Left ventricle myocardium inferior (tissue), 1 donor: ENCODE measurements at regions of chr22 and their contacts with region 1.

Region 1: GRCh38 chr22:23772649-23773495 is at the start of gene MMP11:
- DNase-seq: peak; percentile 73
- H3K4me3 ChIP-seq: peak within 1 kb of the TSS; percentile 70
- H3K27ac ChIP-seq: peak within 1 kb of the TSS; percentile 83
- H3K4me1 ChIP-seq: peaks cover 79% of the 10 kb centered on the region
- H3K27me3 ChIP-seq: no peaks in the 10 kb centered on the region
- CTCF ChIP-seq: peak; percentile 12
- total RNA-seq, gene MMP11: 16.9 TPM

Region 2: GRCh38 chr22:23849009-23850006 is 76.4 kb after region 1 on chr22:
- intact Hi-C with region 1: loop called (anchors 5 kb)
- DNase-seq: peak; percentile 84
- H3K4me3 ChIP-seq: peak overlapping the region; percentile 23
- H3K27ac ChIP-seq: no peak overlapping the region
- H3K4me1 ChIP-seq: peaks cover 44% of the 10 kb centered on the region
- H3K27me3 ChIP-seq: no peaks in the 10 kb centered on the region
- CTCF ChIP-seq: peak; percentile 98